Ascending aorta (tissue), 2 donors: ENCODE measurements at regions of chr1 and their contacts with region 1.

Region 1: GRCh38 chr1:3393024-3393986 is 61.2 kb upstream of the ARHGEF16 start:
- DNase-seq: no peak
- H3K4me3 ChIP-seq: peak overlapping the region; percentile 53 to 67
- H3K27ac ChIP-seq: peak overlapping the region; percentile 97 to 99
- H3K4me1 ChIP-seq: peaks cover 12 to 60% of the 10 kb centered on the region in 2 donors
- H3K27me3 ChIP-seq: no peaks in the 10 kb centered on the region
- CTCF ChIP-seq: no peak

Region 2: DNA sequence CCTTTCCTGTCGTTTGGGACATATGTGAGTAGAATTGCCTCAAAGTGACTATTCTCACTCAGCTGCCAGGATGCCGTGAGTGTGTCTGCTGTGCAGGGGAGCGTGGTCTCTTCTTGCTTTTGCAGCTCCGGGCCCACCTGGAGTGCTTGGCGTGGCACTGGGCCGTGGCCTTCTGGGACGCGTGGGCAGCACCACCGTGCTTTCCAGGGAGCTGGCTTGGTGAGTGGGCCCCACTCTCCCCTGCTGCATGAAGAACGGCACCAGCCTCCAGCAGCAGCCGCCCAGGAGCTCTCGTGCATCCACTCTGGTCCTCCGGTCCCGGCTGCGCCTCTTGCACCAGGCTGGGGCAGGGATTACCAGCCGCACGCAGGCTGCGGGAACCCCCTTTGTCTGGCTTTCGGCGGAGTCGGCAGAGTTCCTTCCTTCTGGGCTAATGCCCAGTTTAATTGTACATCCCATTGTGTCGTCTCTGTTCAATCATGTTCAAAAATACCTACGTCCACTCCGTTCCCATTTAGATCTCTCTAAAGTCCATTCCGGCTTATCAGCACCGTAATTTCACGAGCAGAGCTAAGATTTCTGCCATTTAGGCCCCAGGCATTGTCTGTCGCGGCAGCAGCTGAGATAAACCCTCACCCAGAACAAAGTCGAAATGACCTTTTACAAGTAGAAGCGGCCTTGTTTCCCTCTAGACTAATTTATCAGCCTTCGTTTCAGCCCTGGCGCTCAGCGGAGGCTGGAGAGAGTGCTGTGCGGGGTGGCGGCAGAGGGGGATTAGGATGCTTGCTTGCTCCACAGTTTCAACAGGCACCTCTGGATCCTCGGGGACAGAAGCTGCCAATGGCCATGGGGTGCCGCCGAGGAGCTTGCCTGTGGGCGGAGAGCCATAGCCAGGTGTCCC is 194.7 kb before region 1 on chr1:
- intact Hi-C with region 1: loop called (anchors 5 kb)
- DNase-seq: no peak
- H3K4me3 ChIP-seq: no peak overlapping the region
- H3K27ac ChIP-seq: peak overlapping the region; percentile 99 to 100
- H3K4me1 ChIP-seq: peaks cover 40 to 69% of the 10 kb centered on the region in 2 donors
- H3K27me3 ChIP-seq: no peaks in the 10 kb centered on the region
- CTCF ChIP-seq: no peak

Region 3: GRCh38 chr1:3275471-3276340 is 117.6 kb before region 1 on chr1:
- intact Hi-C with region 1: no loop called
- DNase-seq: peak; percentile 39 to 86
- H3K4me3 ChIP-seq: peak overlapping the region in 1 of 2 donors; percentile 44
- H3K27ac ChIP-seq: peak overlapping the region; percentile 91 to 93
- H3K4me1 ChIP-seq: peaks cover 12 to 36% of the 10 kb centered on the region in 2 donors
- H3K27me3 ChIP-seq: no peaks in the 10 kb centered on the region
- CTCF ChIP-seq: no peak

Region 4: GRCh38 chr1:3369446-3370076 is 23.7 kb before region 1 on chr1:
- intact Hi-C with region 1: loop called (anchors 2 kb)
- DNase-seq: peak; percentile 79 to 96
- H3K4me3 ChIP-seq: peak overlapping the region in 1 of 2 donors; percentile 21
- H3K27ac ChIP-seq: peak overlapping the region; percentile 95 to 97
- H3K4me1 ChIP-seq: peaks cover 47 to 86% of the 10 kb centered on the region in 2 donors
- H3K27me3 ChIP-seq: no peaks in the 10 kb centered on the region
- CTCF ChIP-seq: no peak

Region 5: GRCh38 chr1:5084676-5085075 is 1691.4 kb after region 1 on chr1:
- intact Hi-C with region 1: no loop called
- DNase-seq: no peak
- H3K4me3 ChIP-seq: no peak overlapping the region
- H3K27ac ChIP-seq: no peak overlapping the region
- H3K4me1 ChIP-seq: no peaks in the 10 kb centered on the region
- H3K27me3 ChIP-seq: no peaks in the 10 kb centered on the region
- CTCF ChIP-seq: no peak